ENCODE measurements at regions of chr5 and their contacts with region 1.

Region 1: GRCh38 chr5:113612060-113612496 is 98.6 kb downstream of the YTHDC2 start:
- DNase-seq: peak; percentile 52
- H3K4me3 ChIP-seq: no peak overlapping the region
- H3K27ac ChIP-seq: no peak overlapping the region
- H3K4me1 ChIP-seq: no peaks in the 10 kb centered on the region
- H3K27me3 ChIP-seq: no peaks in the 10 kb centered on the region
- CTCF ChIP-seq: peak; percentile 72

Region 2: DNA sequence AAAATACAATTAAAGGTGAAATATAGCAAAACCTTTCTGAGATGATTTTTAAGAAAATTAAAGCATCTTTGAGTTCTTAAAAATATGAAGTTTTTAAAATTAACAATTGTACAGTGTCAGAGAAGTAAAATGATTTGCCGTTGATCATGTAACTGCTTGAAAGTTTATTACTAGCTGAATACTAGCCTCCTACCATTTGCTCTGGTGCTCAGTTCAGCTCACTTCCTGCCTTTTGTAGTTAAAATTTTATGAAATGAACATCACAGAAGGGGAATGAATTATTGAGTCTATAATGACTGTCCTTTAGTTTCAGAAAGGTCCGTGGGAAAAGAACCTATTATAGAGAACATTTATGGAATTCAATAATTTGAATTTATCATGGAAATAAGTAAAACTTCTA is 88.9 kb before region 1 on chr5:
- CTCF ChIA-PET with region 1: no interaction called
- POLR2A ChIA-PET with region 1: no interaction called
- intact Hi-C with region 1: no loop called
- DNase-seq: no peak
- H3K4me3 ChIP-seq: no peak overlapping the region
- H3K27ac ChIP-seq: no peak overlapping the region
- H3K4me1 ChIP-seq: peaks cover 26% of the 10 kb centered on the region
- H3K27me3 ChIP-seq: no peaks in the 10 kb centered on the region
- CTCF ChIP-seq: no peak

Region 3: GRCh38 chr5:113663880-113664541 is 51.9 kb after region 1 on chr5:
- CTCF ChIA-PET with region 1: interaction called, 24 read pairs
- POLR2A ChIA-PET with region 1: no interaction called
- intact Hi-C with region 1: loop called (anchors 1 kb)
- DNase-seq: peak; percentile 80
- H3K4me3 ChIP-seq: no peak overlapping the region
- H3K27ac ChIP-seq: no peak overlapping the region
- H3K4me1 ChIP-seq: no peaks in the 10 kb centered on the region
- H3K27me3 ChIP-seq: no peaks in the 10 kb centered on the region
- CTCF ChIP-seq: peak; percentile 72

Region 4: DNA sequence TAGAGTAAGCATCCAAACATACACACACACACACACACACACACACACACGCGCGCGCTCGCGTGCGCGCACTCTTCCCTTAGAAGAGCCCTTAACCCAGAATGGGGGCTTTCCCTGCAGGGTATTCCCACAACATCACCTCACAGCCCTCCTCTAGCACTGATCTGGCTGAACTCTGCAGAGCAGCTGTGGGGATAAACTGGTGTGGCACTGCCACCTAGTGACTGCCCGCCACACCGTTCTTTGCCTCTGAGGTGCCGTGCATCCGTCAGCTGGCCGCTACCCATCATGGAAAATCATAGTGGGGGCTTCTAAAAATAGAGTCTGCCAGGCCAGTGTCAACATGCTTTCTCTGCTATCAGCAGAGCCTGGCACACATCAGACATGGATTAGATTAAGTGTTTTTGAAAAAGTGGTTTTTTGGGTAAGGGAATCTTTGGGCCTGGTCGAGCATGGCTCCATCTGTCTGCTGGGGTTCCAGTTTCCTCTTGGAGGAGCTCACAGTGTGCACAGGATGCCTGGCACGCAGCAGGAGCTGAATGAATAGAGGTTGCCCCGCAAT is 837.9 kb after region 1 on chr5:
- CTCF ChIA-PET with region 1: interaction called, 13 read pairs
- POLR2A ChIA-PET with region 1: no interaction called
- intact Hi-C with region 1: loop called (anchors 2 kb)
- DNase-seq: peak; percentile 65
- H3K4me3 ChIP-seq: no peak overlapping the region
- H3K27ac ChIP-seq: no peak overlapping the region
- H3K4me1 ChIP-seq: no peaks in the 10 kb centered on the region
- H3K27me3 ChIP-seq: peaks cover 14% of the 10 kb centered on the region
- CTCF ChIP-seq: peak; percentile 87

Region 5: DNA sequence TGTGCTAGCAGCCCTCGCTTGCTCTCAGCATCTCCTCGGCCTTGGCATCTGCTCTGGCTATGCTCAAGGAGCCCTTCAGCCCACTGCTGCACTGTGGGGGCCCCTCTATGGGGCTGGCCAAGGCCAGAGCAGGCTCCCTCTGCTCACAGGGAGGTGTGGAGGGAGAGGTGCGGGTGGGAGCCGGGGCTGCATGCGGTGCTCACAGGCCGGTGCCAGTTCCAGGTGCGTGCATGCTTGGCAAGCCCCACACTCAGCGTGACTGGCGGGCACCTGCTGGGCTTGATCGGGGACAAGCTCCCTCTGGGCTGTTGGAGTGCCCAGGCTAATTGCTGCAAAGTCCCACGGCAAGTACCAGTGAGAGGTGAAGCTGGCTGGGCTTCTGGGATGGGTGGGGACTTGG is 1387.1 kb after region 1 on chr5:
- CTCF ChIA-PET with region 1: no interaction called
- POLR2A ChIA-PET with region 1: interaction called, 13 read pairs
- intact Hi-C with region 1: no loop called
- DNase-seq: no peak
- H3K4me3 ChIP-seq: no peak overlapping the region
- H3K27ac ChIP-seq: no peak overlapping the region
- H3K4me1 ChIP-seq: no peaks in the 10 kb centered on the region
- H3K27me3 ChIP-seq: no peaks in the 10 kb centered on the region
- CTCF ChIP-seq: no peak

Region 6: DNA sequence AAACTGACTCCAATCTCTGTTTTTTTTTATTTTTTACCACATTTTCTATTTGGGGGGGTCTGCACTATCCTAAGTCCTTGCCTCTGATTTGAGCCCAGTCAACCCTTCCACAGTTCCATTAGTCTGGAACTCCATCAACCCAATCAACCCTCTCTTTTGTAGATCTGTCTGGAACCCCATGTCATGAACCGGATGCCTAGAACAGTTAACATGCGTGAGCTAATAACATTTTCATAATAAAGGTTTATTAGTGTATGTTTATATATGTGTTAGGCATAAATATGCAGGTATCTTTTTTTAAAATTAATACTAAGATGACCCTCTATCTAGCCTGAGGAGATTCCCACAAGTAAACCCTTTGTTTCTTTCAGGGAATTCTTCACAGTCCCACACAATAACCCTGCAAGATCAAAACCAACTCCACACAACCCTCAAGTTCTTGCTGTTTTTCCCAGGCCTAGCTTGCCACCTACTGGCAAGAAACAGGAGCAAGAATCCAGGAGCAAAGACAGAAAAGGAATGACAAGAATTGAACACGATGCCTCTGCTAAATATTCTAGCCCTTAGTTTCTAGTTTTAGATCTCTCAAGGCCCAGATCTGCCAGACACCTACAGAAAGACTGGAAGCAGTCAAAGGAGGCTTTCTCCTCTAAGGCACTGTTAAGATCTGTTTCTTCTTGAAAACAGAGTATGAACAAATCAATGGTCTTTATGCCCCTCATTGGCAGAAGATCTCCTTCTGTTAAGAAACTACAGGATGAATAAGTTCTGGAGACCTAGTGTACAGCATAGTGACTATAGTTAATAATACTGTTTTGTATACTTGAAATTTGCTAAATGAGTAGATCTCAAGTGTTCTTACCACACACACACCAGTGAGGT is 1457.2 kb after region 1 on chr5:
- CTCF ChIA-PET with region 1: interaction called, 5 read pairs
- POLR2A ChIA-PET with region 1: no interaction called
- intact Hi-C with region 1: loop called (anchors 10 kb)
- DNase-seq: peak; percentile 74
- H3K4me3 ChIP-seq: no peak overlapping the region
- H3K27ac ChIP-seq: no peak overlapping the region
- H3K4me1 ChIP-seq: no peaks in the 10 kb centered on the region
- H3K27me3 ChIP-seq: no peaks in the 10 kb centered on the region
- CTCF ChIP-seq: peak; percentile 79

Measured in A673 (cell line).